Left cardiac atrium (tissue), 4 donors: ENCODE measurements at regions of chr10 and their contacts with region 1.

Region 1: DNA sequence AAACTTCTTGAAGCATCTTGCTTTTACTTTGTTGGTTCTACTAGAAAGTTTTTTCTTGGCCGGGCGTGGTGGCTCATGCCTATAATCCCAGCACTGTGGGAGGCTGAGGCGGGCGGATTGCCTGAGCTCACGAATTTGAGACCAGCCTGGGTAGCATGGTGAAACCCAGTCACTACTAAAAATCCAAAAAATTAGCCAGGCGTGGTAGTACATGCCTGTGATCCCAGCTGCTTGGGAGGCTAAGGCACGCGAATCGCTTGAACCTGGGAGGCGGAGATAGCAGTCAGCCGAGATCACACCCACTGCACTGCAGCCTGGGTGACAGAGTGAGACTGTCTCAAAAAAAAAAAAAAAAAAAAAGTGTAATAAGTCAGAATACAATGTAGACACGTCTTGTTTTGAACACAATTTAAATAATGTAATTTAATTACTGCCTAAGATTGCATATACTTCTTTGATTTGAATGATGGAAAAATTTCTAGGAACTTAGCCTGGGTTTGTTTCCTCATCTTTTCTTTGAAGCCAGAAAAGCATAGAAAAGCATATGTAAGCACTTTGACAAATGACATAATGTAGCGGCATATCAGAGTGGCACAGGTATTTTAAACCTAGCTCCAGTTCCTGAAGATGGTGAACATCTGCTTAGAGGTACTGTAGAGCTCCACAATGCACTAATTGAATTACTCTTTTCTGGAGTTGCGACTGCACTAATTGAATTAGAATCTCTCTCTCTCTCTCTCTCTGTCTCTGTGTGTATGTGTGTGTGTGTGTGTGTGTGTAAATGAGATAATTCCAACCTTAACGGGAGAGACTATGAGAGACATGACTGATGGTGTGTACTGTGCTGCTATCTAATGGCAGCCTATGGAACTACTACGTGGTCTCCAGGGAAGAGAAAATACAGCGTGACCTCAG is 87.8 kb downstream of the BTRC start:
- DNase-seq: no peak
- ATAC-seq: peak; percentile 91 to 96

Region 2: DNA sequence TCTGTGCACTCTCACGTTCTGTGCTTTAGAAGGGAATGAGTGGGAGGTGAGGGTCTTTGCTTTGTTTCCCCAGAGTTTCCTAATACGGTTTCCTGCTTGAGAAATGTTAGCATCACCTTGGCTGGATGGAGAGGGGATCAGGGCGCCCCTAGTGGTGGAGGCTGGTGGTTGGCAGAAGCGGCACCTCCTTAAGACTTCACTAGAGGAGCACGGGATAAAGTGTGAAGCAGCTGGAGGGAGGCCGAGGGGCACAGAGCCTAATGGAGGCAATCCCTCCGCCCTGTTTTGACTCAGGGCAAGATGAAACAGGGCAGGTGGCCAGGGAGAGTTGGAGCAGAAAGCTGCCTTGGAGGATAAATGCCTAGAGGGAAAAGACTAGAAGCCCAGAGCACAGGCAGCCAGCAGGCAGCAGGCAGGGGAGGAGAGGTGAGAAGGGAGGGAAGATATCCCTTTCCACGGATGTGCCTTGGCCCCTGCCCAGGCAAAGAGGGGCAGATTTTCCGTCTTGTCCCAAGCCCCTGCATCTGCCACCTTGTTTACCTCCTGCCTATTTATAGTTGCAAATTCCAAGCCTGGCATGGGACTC is 143.8 kb before region 1 on chr10:
- intact Hi-C with region 1: loop called in 1 of 2 experiments (anchors 5 kb)
- DNase-seq: peak; percentile 66
- ATAC-seq: peak; percentile 66 to 72